Activated CD4-positive, alpha-beta T cell treated with anti-CD3 and anti-CD28 coated beads for 36 hours (primary cell): ENCODE measurements at regions of chr3 and their contacts with region 1.

Region 1: GRCh38 chr3:30611613-30612436 is 5.4 kb downstream of the TGFBR2 start:
- DNase-seq: no peak
- ATAC-seq: no peak
- H3K4me3 Mint-ChIP-seq: peak overlapping the region; percentile 99
- H3K27ac Mint-ChIP-seq: peak overlapping the region; percentile 94
- H3K4me1 Mint-ChIP-seq: peaks cover 68% of the 10 kb centered on the region
- H3K27me3 Mint-ChIP-seq: no peaks in the 10 kb centered on the region

Region 2: GRCh38 chr3:30623351-30623750 is 11.5 kb after region 1 on chr3:
- CTCF ChIA-PET with region 1: interaction called, 5 read pairs
- POLR2A ChIA-PET with region 1: interaction called, 16 read pairs
- intact Hi-C with region 1: loop called in 1 of 2 experiments (anchors 1 kb)
- DNase-seq: no peak
- ATAC-seq: peak; percentile 20
- H3K4me3 Mint-ChIP-seq: peak overlapping the region; percentile 17
- H3K27ac Mint-ChIP-seq: peak overlapping the region; percentile 83
- H3K4me1 Mint-ChIP-seq: peaks cover 96% of the 10 kb centered on the region
- H3K27me3 Mint-ChIP-seq: no peaks in the 10 kb centered on the region

Region 3: DNA sequence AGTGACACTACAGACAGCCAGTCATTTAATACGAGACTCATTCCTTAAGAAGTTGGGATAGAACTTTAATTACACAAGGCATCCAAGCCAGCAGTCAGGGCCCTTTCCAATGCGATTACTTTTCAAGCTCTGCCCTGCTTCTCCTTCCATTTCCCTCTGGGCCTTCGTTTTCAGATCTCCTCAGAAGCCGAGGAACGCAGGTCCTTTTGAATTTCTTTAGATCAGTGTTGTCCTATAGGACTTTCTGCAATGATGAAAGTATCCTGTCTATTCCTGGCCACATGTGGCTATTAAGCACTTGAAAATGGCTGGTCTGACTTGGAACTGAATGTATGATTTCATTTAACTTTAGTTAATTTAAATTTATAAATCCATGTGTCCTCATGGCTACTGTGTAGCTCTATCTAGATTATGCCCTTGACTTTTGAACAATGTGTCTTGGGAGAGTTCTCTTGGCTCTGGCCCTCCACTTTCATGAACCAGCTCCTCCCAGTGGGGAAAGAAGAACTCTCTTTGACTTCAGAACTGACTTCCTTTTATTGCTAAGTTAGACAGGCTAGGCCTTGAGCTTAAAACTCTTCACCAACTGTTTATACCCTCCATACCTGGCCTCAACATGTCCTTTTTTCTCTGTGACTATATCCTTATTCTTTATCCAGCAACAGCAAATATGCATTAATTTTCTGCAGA is 17.2 kb after region 1 on chr3:
- CTCF ChIA-PET with region 1: interaction called, 5 read pairs
- POLR2A ChIA-PET with region 1: interaction called, 9 read pairs
- intact Hi-C with region 1: loop called in 1 of 2 experiments (anchors 1 kb)
- DNase-seq: no peak
- ATAC-seq: no peak
- H3K4me3 Mint-ChIP-seq: peak overlapping the region; percentile 61
- H3K27ac Mint-ChIP-seq: peak overlapping the region; percentile 97
- H3K4me1 Mint-ChIP-seq: peaks cover 96% of the 10 kb centered on the region
- H3K27me3 Mint-ChIP-seq: no peaks in the 10 kb centered on the region

Region 4: DNA sequence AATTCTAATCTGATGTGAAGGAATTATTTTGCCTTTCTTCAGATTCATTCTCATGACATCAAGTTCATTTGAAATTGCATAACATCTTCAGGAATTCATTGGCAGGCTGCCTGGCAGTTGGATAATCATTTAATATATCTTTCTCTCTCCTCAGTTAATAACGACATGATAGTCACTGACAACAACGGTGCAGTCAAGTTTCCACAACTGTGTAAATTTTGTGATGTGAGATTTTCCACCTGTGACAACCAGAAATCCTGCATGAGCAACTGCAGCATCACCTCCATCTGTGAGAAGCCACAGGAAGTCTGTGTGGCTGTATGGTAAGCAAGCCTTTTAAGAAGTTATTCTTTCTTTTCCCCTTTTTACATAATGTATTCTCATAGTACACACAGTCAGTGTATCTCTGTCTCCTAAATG is 32.8 kb after region 1 on chr3:
- CTCF ChIA-PET with region 1: interaction called, 12 read pairs
- POLR2A ChIA-PET with region 1: interaction called, 6 read pairs
- intact Hi-C with region 1: loop called (anchors 1 to 5 kb)
- DNase-seq: peak; percentile 74
- ATAC-seq: peak; percentile 62
- H3K4me3 Mint-ChIP-seq: peak overlapping the region; percentile 58
- H3K27ac Mint-ChIP-seq: peak overlapping the region; percentile 94
- H3K4me1 Mint-ChIP-seq: peaks cover 94% of the 10 kb centered on the region
- H3K27me3 Mint-ChIP-seq: no peaks in the 10 kb centered on the region

Region 5: DNA sequence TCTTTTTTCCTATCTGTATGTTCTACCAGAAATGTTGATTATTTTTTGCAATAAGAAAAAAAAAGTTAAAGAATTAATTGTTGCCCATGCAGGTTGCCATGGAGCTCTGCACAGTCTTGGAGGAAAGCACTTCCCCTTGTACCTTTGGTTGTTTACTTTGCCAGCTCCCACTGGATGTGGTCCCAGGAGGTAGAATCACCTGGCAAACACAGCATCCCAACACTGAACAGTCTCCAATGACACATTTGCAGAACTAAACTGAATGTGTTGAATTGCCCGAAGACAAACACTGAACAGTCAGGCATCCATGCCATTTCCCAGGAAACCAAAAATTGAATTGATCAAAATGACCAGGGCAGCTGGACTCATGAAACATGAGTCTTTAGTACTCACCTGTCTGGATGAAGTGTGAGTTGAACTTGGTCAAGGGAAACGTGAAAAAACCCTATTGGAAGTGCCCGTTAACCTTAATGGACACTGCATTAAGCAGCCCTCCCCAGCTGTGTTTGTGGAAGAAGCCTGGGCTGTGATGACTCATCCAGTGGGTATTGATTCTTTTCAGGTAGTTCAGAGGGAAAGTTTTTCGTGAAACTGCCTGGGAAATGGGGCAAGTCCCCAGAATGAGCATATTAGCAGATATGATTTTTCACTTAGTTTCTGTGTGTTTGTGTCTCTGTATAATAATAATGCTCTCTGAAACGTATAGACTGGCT is 636.2 kb after region 1 on chr3:
- CTCF ChIA-PET with region 1: no interaction called
- POLR2A ChIA-PET with region 1: no interaction called
- intact Hi-C with region 1: no loop called
- DNase-seq: peak; percentile 52
- ATAC-seq: peak; percentile 21
- H3K4me3 Mint-ChIP-seq: no peak overlapping the region
- H3K27ac Mint-ChIP-seq: peak overlapping the region; percentile 51
- H3K4me1 Mint-ChIP-seq: peaks cover 53% of the 10 kb centered on the region
- H3K27me3 Mint-ChIP-seq: peaks cover 3% of the 10 kb centered on the region